WTC11 (cell line): ENCODE measurements at regions of chr19 and their contacts with region 1.

Region 1: GRCh38 chr19:12681074-12681951 is at the start of gene DHPS:
- DNase-seq: peak; percentile 92
- ATAC-seq: peak; percentile 89
- H3K4me3 Mint-ChIP-seq: peak within 1 kb of the TSS; percentile 89
- H3K27ac Mint-ChIP-seq: peak within 1 kb of the TSS; percentile 99
- H3K4me1 Mint-ChIP-seq: peaks cover 5% of the 10 kb centered on the region; the same call in 1 of the 2 replicates
- H3K27me3 Mint-ChIP-seq: no peaks in the 10 kb centered on the region
- CTCF ChIP-seq: no peak
- total RNA-seq, gene DHPS: 93.3 to 115 TPM (median 104 TPM) in 3 replicates

Region 2: DNA sequence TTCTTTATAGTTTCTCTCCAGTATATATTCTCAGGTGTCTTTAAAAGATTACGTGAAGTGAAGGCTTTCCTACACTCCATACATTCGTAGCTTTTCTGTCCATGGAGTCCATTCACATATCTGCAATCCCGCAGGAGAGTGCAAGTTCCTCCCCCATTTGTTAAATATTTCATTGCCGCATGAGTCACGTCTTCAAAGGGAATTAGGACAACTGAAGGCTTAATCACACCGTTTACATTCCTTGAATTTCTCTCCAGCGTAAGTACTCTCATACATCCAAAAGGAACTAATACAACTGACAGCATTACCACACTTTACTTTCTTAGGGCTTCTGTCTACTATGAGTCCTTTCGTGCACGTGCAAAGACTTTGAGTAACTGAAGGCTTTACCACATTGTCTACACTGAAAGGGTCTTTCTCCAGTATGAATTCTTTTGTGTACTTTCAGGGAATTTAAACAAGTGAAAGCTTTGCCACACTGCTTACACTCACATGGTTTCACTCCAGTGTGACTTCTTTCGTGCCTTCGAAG is 101.1 kb before region 1 on chr19:
- CTCF ChIA-PET with region 1: no interaction called
- POLR2A ChIA-PET with region 1: no interaction called
- DNase-seq: no peak
- ATAC-seq: no peak
- H3K4me3 Mint-ChIP-seq: no peak overlapping the region
- H3K27ac Mint-ChIP-seq: no peak overlapping the region
- H3K4me1 Mint-ChIP-seq: no peaks in the 10 kb centered on the region
- H3K27me3 Mint-ChIP-seq: no peaks in the 10 kb centered on the region; the same call in 1 of the 2 replicates
- CTCF ChIP-seq: no peak

Region 3: GRCh38 chr19:12647490-12648071 is 33.7 kb before region 1 on chr19:
- CTCF ChIA-PET with region 1: interaction called, 12 read pairs
- POLR2A ChIA-PET with region 1: no interaction called
- DNase-seq: peak; percentile 95
- ATAC-seq: peak; percentile 92
- H3K4me3 Mint-ChIP-seq: peak overlapping the region; percentile 76
- H3K27ac Mint-ChIP-seq: peak overlapping the region; percentile 95
- H3K4me1 Mint-ChIP-seq: peaks cover 11% of the 10 kb centered on the region
- H3K27me3 Mint-ChIP-seq: peaks cover 11% of the 10 kb centered on the region
- CTCF ChIP-seq: no peak

Region 4: DNA sequence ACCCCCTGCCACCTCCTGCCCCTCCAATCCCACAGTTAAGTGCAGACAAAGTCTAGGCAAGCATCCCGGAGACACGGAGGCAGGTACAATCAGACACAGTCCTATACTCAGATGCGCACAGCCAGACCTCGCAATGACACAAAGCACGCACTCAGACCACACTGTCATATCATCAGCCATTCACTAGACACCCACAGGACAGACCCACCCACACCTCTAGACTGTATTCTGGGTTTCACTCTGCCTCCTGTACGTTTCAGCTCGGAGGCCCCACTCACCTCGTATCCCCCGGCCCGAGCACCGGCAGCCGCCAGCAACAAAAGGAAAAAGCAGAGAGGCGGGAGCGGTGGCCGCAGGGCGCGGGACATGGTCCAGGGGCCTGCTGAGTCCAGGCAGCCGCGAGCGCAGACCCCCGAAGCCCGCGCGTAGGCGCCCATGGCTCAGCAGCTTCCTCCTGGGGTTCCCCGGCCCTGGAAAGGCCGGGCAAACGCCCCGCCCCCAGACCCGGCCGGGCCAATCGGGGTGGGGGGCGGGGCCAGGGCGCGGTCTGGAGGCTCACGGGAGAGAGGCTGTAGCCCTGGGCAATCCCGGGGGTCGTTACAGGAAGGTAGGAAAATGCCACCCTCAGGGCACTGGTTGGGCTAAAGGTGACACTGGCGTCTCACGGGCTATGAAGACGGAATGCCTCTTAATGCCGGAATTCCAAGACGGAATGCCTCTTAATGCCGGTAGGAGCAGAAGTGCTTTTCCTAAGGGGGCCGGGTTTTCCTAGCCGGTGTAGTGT is 14.9 kb before region 1 on chr19 and contains the starts of genes MAN2B1 and WDR83:
- CTCF ChIA-PET with region 1: interaction called, 22 read pairs
- POLR2A ChIA-PET with region 1: interaction called, 6 read pairs
- DNase-seq: peak; percentile 84
- ATAC-seq: peak; percentile 72
- H3K4me3 Mint-ChIP-seq: peak within 1 kb of the TSS; percentile 98
- H3K27ac Mint-ChIP-seq: peak within 1 kb of the TSS; percentile 80
- H3K4me1 Mint-ChIP-seq: peaks cover 31% of the 10 kb centered on the region
- H3K27me3 Mint-ChIP-seq: no peaks in the 10 kb centered on the region
- CTCF ChIP-seq: no peak
- total RNA-seq, gene MAN2B1: 69.2 to 73.4 TPM (median 72.0 TPM) in 3 replicates
- total RNA-seq, gene WDR83: 21.8 to 26.3 TPM (median 23.7 TPM) in 3 replicates

Region 5: GRCh38 chr19:12696366-12697335 is 15.3 kb after region 1 on chr19 and contains the start of gene FBXW9:
- CTCF ChIA-PET with region 1: interaction called, 4 read pairs
- POLR2A ChIA-PET with region 1: interaction called, 13 read pairs
- DNase-seq: peak; percentile 98
- ATAC-seq: peak; percentile 83
- H3K4me3 Mint-ChIP-seq: peak within 1 kb of the TSS; percentile 90
- H3K27ac Mint-ChIP-seq: peak within 1 kb of the TSS; percentile 99
- H3K4me1 Mint-ChIP-seq: peaks cover 3% of the 10 kb centered on the region
- H3K27me3 Mint-ChIP-seq: no peaks in the 10 kb centered on the region
- CTCF ChIP-seq: no peak
- total RNA-seq, gene FBXW9: 13.7 to 16.0 TPM (median 15.2 TPM) in 3 replicates